ENCODE measurements at regions of chr7 and their contacts with region 1.

Region 1: DNA sequence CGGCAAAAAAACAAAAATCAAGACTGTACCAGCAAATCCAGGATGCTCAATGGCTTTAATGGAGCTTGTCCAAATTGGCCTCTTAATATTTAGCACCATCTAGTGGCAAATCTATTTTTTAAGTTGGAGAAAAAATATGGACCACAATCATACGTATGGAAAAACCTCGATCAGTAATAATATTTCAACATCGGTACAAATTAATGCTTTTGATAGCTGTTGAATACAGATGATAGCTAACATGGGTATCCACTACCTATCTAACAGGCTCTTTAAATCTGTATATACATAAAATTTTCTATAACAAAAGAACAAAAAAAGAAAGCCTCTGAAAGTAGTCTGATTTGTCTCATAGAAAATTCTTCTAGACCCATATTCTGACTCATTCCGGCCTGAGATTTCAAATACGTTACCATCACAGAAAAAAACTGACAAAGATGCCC is 29.2 kb downstream of the COA1 start:
- DNase-seq: no peak
- ATAC-seq: peak; percentile 68 to 87
- H3K4me3 ChIP-seq: no peak overlapping the region
- H3K27ac ChIP-seq: no peak overlapping the region
- H3K4me1 ChIP-seq: peaks cover 8% of the 10 kb centered on the region
- H3K27me3 ChIP-seq: no peaks in the 10 kb centered on the region
- CTCF ChIP-seq: peak; percentile 68

Region 2: GRCh38 chr7:43582503-43583423 is 117.3 kb before region 1 on chr7 and contains the start of gene STK17A:
- intact Hi-C with region 1: loop called (anchors 5 kb)
- DNase-seq: peak; percentile 95
- ATAC-seq: peak; percentile 95 to 99
- H3K4me3 ChIP-seq: peak within 1 kb of the TSS; percentile 93
- H3K27ac ChIP-seq: peak within 1 kb of the TSS; percentile 94
- H3K4me1 ChIP-seq: peaks cover 20% of the 10 kb centered on the region
- H3K27me3 ChIP-seq: no peaks in the 10 kb centered on the region
- CTCF ChIP-seq: peak; percentile 95
- total RNA-seq, gene STK17A: 27.1 TPM

Measured in lower lobe of right lung (tissue), 2 donors.